HAP-1 (cell line): ENCODE measurements at regions of chr9 and their contacts with region 1.

Region 1: GRCh38 chr9:132575005-132575609 is 7.3 kb upstream of the BARHL1 start:
- DNase-seq: peak; percentile 65 to 91
- H3K4me3 ChIP-seq: no peak overlapping the region
- H3K4me1 ChIP-seq: no peaks in the 10 kb centered on the region
- H3K27me3 ChIP-seq: peaks cover 40% of the 10 kb centered on the region

Region 2: DNA sequence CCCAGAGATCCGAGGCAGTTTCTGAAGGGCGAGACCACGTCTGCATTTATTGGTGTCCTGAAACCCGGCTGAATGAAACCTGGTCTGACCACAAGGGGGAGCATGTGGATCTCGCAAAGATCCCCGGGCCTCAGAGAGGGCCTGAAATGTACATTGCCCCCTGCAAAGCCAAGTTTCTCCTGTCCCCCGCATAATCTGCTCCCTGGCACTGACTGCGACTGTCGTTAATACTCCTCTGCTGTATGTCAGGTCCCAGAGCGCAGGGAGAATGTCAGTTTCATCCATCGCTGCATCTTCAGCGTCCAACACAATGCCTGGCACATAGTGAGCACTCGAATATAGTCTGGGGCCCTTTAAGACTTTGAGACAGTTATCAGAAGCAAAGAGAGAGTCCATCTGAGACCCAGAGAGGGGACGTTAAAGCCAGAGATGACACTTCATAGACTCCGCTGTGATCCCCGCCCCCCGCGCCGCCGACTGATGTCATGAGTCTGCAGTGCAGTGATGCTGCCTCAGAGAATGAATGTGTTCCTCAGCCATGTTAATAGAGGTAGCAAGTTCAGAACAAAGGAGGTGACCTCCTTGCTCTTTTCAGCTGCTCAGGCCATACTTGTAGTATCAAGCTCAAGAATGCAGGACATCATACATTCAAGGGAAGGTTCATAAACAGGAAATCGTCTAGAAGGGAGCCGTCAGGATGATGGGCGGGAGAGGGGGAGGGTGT is 67.2 kb before region 1 on chr9:
- in situ Hi-C with region 1: loop called (anchors 5 kb)
- DNase-seq: peak; percentile 66 to 87
- H3K4me3 ChIP-seq: no peak overlapping the region
- H3K4me1 ChIP-seq: no peaks in the 10 kb centered on the region
- H3K27me3 ChIP-seq: peaks cover 11% of the 10 kb centered on the region; the same call in 1 of the 2 replicates